ENCODE measurements at regions of chr14 and their contacts with region 1.

Region 1: GRCh38 chr14:64914237-64914971 is at the start of gene CHURC1:
- DNase-seq: peak; percentile 87
- H3K4me3 ChIP-seq: peak within 1 kb of the TSS; percentile 91
- H3K27me3 ChIP-seq: peaks cover 4% of the 10 kb centered on the region
- CTCF ChIP-seq: no peak
- polyA plus RNA-seq, gene CHURC1: 30.6 and 84.4 TPM in 2 replicates

Region 2: DNA sequence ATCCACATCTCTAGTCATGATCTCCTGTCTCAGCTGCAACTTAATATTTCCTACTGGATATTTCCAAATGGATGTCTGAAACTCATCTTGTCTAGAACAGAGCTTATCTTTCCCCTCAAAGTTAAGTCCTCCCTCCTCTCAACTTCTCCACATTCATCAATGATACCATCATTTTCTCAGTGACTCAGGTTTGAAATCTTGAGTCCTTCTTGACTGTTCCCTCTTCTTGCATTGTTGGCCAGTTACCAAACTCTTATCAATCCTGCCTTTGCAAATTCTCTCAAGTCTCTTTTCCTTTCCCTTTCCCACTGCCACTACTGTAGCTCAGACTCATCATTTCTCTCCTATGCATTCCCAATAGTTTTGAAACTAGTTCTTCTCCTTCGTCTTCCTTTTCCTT is 14.4 kb before region 1 on chr14:
- CTCF ChIA-PET with region 1: interaction called, 20 read pairs
- POLR2A ChIA-PET with region 1: interaction called, 11 read pairs
- DNase-seq: no peak
- H3K4me3 ChIP-seq: no peak overlapping the region
- H3K27me3 ChIP-seq: 0 out of 2 replicates have a peak, but pooled peaks cover 5% of the 10 kb centered on the region
- CTCF ChIP-seq: no peak

Region 3: DNA sequence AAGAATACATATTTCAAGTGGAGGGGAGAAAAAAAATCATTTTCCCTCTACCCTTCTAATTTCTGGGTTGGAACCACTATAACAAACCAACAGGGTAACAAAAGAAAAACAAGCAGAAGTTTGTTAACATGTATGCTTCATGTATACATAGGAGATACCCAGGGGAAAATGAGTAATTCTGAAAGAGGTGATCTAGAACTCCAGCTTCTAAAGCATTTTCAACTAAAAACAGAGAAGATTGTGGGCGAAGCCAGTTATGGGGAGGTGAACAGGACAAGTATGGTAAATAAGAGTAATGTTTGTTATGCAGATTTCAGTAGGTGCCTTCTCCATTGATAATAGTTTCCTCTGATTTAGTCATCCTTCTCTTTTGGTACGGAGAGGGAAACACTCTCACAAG is 89.0 kb after region 1 on chr14:
- CTCF ChIA-PET with region 1: no interaction called
- POLR2A ChIA-PET with region 1: no interaction called
- DNase-seq: no peak
- H3K4me3 ChIP-seq: no peak overlapping the region
- H3K27me3 ChIP-seq: no peaks in the 10 kb centered on the region
- CTCF ChIP-seq: no peak